Activated CD4-positive, alpha-beta T cell treated with anti-CD3 and anti-CD28 coated beads for 36 hours (primary cell): ENCODE measurements at regions of chr18 and their contacts with region 1.

Region 1: DNA sequence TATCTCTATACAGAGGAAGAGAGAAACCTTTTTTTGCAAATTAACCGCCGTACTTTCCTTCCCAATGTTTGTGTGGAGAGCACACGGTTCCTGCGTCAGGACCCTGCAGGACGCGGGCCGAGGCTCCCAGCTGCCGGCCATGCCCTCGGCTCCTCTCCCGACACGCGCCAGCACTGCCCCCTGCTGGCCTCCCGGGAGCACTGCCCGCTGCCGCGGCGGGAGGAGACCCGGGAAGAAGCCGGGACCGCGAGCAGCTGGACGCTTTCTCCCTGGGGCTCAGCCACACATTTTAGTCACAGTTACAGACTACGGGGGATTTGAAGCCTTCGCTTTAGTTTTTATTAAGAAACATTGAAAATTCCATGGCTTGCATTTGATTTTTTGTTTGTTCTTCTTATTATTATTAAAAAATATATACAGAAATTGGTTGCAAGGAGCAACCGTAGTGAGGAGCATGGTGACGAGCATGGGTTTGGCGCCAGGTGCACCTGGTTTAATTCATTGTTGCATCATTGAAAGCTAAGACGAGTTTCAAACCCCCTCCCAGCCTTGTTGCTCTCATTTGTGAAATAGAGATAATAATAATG is 401.2 kb downstream of the GALR1 start:
- DNase-seq: peak; percentile 82
- ATAC-seq: peak; percentile 83
- H3K4me3 Mint-ChIP-seq: no peak overlapping the region
- H3K27ac Mint-ChIP-seq: no peak overlapping the region
- H3K4me1 Mint-ChIP-seq: no peaks in the 10 kb centered on the region
- H3K27me3 Mint-ChIP-seq: peaks cover 14% of the 10 kb centered on the region

Region 2: GRCh38 chr18:76875390-76876325 is 775.2 kb before region 1 on chr18:
- CTCF ChIA-PET with region 1: no interaction called
- POLR2A ChIA-PET with region 1: no interaction called
- intact Hi-C with region 1: loop called in 1 of 2 experiments (anchors 2 kb)
- DNase-seq: peak; percentile 67
- ATAC-seq: peak; percentile 74
- H3K4me3 Mint-ChIP-seq: no peak overlapping the region
- H3K27ac Mint-ChIP-seq: peak overlapping the region; percentile 74
- H3K4me1 Mint-ChIP-seq: peaks cover 14% of the 10 kb centered on the region
- H3K27me3 Mint-ChIP-seq: no peaks in the 10 kb centered on the region

Region 3: GRCh38 chr18:76922107-76922506 is 728.8 kb before region 1 on chr18:
- CTCF ChIA-PET with region 1: interaction called, 4 read pairs
- POLR2A ChIA-PET with region 1: no interaction called
- intact Hi-C with region 1: loop called in 1 of 2 experiments (anchors 2 kb)
- DNase-seq: peak; percentile 71
- ATAC-seq: peak; percentile 97
- H3K4me3 Mint-ChIP-seq: no peak overlapping the region
- H3K27ac Mint-ChIP-seq: no peak overlapping the region
- H3K4me1 Mint-ChIP-seq: peaks cover 15% of the 10 kb centered on the region
- H3K27me3 Mint-ChIP-seq: no peaks in the 10 kb centered on the region

Region 4: GRCh38 chr18:77000527-77000926 is 650.4 kb before region 1 on chr18:
- CTCF ChIA-PET with region 1: interaction called, 3 read pairs
- POLR2A ChIA-PET with region 1: no interaction called
- intact Hi-C with region 1: loop called in 1 of 2 experiments (anchors 1 kb)
- DNase-seq: peak; percentile 70
- ATAC-seq: no peak
- H3K4me3 Mint-ChIP-seq: no peak overlapping the region
- H3K27ac Mint-ChIP-seq: peak overlapping the region; percentile 17
- H3K4me1 Mint-ChIP-seq: peaks cover 21% of the 10 kb centered on the region
- H3K27me3 Mint-ChIP-seq: no peaks in the 10 kb centered on the region

Region 5: GRCh38 chr18:77346208-77346810 is 304.6 kb before region 1 on chr18:
- CTCF ChIA-PET with region 1: interaction called, 3 read pairs
- POLR2A ChIA-PET with region 1: no interaction called
- intact Hi-C with region 1: loop called in 1 of 2 experiments (anchors 5 kb)
- DNase-seq: no peak
- ATAC-seq: no peak
- H3K4me3 Mint-ChIP-seq: no peak overlapping the region
- H3K27ac Mint-ChIP-seq: no peak overlapping the region
- H3K4me1 Mint-ChIP-seq: peaks cover 6% of the 10 kb centered on the region
- H3K27me3 Mint-ChIP-seq: peaks cover 7% of the 10 kb centered on the region